Activated T-helper 2 cell treated with anti-CD3 and anti-CD28 coated beads, Interferon-gamma antibody, Interleukin-2, Interleukin-4, amounts not matched to agents 10 μg/mL and 5 μg/mL and 100 μg/mL, durations not matched to agents 14 hours and 24 hours and 36 hours (primary cell): ENCODE measurements at regions of chr12 and their contacts with region 1.

Region 1: GRCh38 chr12:42325653-42326474 is at the starts of genes PPHLN1 and ZCRB1:
- DNase-seq: peak; percentile 77
- H3K4me3 Mint-ChIP-seq: peak within 1 kb of the TSS; percentile 98
- H3K27ac Mint-ChIP-seq: peak within 1 kb of the TSS; percentile 97
- H3K4me1 Mint-ChIP-seq: peaks cover 29% of the 10 kb centered on the region
- H3K27me3 Mint-ChIP-seq: no peaks in the 10 kb centered on the region
- total RNA-seq, gene PPHLN1: 91.5 and 96.4 TPM in 2 replicates
- total RNA-seq, gene ZCRB1: 58.4 and 64.8 TPM in 2 replicates

Region 2: GRCh38 chr12:42097971-42098370 is 227.9 kb before region 1 on chr12:
- intact Hi-C with region 1: loop called (anchors 10 kb)
- DNase-seq: no peak
- H3K4me3 Mint-ChIP-seq: peak overlapping the region; percentile 81
- H3K27ac Mint-ChIP-seq: peak overlapping the region; percentile 91
- H3K4me1 Mint-ChIP-seq: peaks cover 31% of the 10 kb centered on the region
- H3K27me3 Mint-ChIP-seq: no peaks in the 10 kb centered on the region

Region 3: DNA sequence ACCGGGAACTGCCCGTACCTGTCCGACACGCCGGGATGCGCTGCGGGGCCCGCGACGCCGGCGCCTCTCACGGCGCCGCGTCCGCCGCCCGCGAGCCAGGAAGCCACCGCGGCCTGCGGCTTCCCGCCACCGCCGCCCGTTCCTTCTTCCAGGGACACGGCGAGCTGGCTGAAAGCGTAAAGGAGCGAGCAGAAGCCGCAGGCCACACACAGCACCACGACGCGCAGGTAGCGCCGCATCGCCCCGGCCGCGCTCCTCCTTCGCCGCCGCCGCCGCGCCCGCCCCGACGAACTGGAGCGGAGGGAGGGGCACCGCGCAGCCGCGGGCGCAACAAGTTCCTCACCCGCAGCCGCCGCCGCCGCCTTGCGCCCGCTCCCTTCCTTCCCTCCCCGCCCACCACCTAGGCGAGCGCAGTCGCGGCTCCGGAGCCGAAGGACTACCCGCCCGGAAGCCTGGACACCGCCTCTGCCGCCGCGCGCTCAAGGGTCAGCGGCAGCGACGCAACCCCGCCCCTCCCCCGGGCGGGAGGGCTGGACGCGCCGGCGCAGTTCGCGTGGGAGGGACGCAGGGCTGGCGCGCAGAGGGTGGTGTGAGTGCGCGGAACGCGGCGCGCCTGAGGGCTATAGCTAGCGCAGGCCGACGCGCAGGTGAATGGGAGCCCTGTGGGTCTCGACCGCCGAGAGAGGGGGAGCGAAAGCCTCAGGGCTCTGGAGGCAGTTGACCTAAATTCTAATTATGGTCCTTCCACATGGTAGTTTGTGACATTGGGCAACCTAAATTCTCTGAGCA is 181.3 kb before region 1 on chr12 and contains the start of gene GXYLT1:
- intact Hi-C with region 1: loop called (anchors 1 kb)
- DNase-seq: peak; percentile 77
- H3K4me3 Mint-ChIP-seq: peak within 1 kb of the TSS; percentile 92
- H3K27ac Mint-ChIP-seq: peak within 1 kb of the TSS; percentile 79
- H3K4me1 Mint-ChIP-seq: peaks cover 32% of the 10 kb centered on the region
- H3K27me3 Mint-ChIP-seq: peaks cover 7% of the 10 kb centered on the region
- total RNA-seq, gene GXYLT1: 9.8 and 11.0 TPM in 2 replicates

Region 4: DNA sequence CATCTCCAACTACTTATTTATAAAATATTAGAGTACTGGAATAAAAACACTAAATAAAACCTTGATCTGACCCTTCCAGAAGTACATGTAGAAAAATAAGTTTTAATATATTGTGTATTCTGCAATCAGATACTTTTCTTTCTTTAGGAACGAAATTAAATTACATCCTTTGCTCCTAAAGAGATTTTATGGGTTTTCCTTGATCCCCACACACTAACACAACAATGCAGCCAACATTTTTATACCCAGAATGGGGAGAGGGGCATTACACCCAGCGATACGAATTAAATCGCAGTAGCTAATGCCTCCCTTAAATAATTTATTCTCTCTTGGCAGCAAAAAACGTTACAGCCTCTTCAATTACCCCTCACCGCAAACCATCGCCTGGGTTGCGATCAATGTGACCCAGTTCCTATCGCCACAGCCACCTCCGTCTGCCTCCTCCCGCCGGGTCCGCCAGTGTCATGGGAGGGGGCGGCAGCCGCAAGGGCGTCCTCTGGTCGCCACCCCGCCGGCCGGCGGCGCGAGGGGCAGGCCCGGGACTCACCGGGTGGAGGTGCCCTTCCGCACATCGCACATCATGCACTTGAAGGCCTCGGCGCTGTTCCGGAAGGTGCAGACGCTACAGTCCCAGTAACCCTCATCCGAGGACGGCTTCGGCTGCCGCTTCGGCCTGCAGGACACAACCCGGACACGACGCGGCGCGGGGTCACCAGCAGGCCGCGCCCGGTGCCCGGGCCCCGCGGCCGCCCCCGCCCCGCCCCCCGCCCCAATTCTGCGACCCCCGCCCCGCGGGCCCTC is 88.6 kb before region 1 on chr12:
- intact Hi-C with region 1: loop called (anchors 2 kb)
- DNase-seq: peak; percentile 67
- H3K4me3 Mint-ChIP-seq: peak overlapping the region; percentile 94
- H3K27ac Mint-ChIP-seq: peak overlapping the region; percentile 78
- H3K4me1 Mint-ChIP-seq: peaks cover 38% of the 10 kb centered on the region
- H3K27me3 Mint-ChIP-seq: no peaks in the 10 kb centered on the region

Region 5: DNA sequence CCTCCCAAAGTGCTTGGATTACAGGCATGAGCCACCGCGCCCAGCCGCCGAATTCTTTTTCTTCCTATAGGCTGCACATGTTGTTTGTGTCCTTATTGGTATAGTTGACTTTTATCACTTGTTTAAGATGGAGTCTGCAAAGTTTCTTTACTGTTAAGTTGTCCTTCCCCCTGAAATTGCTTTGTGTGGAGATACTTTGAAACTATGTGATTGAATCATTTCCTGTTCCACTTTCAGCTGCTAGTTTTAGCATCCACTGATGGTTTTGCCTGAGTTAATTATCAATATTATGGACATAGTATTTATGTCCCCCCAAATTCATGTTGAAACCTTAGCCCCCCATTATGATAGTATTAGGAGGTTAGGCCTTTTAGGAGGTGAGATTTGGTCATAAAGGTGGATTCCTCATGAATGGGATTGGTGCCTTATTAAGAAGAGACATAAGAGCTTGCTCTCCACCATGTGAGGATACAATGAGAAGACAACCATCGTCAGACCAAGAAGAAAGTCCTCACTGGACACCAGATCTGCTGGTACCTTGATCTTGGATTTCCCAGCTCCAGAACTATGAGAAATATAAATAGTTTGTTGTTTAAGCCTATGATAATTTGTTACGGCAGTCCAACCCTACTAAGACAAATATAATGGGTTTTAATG is 35.0 kb after region 1 on chr12:
- intact Hi-C with region 1: loop called (anchors 5 kb)
- DNase-seq: no peak
- H3K4me3 Mint-ChIP-seq: no peak overlapping the region
- H3K27ac Mint-ChIP-seq: peak overlapping the region; percentile 60
- H3K4me1 Mint-ChIP-seq: peaks cover 23% of the 10 kb centered on the region
- H3K27me3 Mint-ChIP-seq: no peaks in the 10 kb centered on the region